GM10248 (cell line): ENCODE measurements at regions of chr15 and their contacts with region 1.

Region 1: GRCh38 chr15:91302588-91303439 is 202.8 kb downstream of the SV2B start:
- DNase-seq: peak; percentile 69
- CTCF ChIP-seq: peak; percentile 74

Region 2: GRCh38 chr15:91186904-91187648 is 115.7 kb before region 1 on chr15:
- CTCF ChIA-PET with region 1: no interaction called
- POLR2A ChIA-PET with region 1: no interaction called
- DNase-seq: no peak
- CTCF ChIP-seq: no peak

Region 3: GRCh38 chr15:91289324-91289723 is 13.5 kb before region 1 on chr15:
- CTCF ChIA-PET with region 1: interaction called, 30 read pairs
- POLR2A ChIA-PET with region 1: no interaction called
- DNase-seq: no peak
- CTCF ChIP-seq: peak; percentile 24

Region 4: DNA sequence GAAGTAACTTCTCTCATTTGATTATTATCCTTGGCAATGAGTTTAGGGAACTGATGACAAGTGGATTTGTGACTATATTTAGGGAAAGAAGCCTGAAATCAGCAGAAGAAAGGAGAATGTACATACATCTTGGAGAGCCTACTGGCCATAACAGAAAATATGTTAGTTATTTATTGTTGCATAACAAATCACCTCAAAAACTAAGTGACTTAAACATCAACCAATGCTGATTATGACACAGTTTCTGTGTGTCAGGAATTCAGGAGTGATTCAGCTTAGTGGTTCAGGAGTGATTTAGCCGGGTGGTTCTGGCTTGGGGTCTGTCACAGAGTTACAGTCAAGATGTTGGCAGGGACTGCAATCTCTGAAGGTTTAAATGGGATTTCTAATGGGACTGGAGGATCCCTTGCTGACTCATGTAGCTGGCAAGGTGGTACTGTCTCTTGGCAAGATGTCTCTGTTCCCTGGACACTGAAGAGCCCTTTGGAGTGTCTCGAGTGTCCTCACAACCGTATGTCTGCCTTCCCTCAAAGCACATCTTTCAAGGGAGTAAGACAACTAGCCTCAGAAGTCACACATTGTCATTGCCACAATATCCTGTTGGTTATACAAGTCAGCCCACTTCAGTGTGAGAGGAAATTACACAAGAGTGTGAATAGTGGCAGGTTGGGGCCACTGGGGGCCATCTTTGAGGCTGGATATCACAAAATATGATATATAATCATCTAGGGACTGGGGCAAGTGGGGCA is 46.1 kb after region 1 on chr15:
- CTCF ChIA-PET with region 1: no interaction called
- POLR2A ChIA-PET with region 1: no interaction called
- DNase-seq: no peak
- CTCF ChIP-seq: no peak

Region 5: DNA sequence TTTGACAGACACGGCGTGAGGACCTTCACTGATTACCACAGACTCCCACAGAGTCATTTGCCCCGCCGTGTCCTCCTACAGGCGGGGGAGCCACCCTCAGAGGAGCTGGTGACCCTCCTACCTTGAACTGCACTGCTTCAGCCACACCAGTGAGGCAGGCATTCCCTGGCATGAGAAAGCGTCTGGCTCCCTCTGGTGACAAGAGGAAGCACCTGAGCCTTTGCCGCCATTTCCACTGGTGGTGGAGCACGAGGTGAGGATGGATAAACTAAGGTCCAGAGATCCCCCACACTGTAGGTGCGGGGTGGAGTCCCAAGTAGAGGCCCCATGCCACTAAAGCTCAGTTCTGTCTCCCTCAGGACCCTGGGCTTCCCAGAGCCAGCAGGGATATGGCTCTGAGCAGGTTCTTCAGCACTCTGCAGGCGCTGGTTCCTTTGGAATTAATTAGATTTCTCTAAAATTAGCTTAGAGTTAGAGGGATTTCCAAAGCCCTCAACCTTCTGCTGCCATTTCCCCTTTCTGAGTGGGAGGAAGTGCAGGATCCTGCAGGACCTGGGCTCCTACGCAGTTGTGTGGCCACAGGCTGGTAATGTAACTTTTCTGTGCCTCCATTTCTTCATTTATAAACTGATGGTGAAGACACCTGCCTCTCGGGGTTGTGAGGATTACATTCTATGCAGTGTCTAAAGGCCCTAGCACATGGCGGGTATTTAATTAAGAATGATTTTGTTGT is 774.7 kb after region 1 on chr15:
- CTCF ChIA-PET with region 1: interaction called, 56 read pairs
- POLR2A ChIA-PET with region 1: no interaction called
- DNase-seq: peak; percentile 71
- CTCF ChIP-seq: peak; percentile 59